OCI-LY7 (cell line): ENCODE measurements at regions of chr12 and their contacts with region 1.

Region 1: DNA sequence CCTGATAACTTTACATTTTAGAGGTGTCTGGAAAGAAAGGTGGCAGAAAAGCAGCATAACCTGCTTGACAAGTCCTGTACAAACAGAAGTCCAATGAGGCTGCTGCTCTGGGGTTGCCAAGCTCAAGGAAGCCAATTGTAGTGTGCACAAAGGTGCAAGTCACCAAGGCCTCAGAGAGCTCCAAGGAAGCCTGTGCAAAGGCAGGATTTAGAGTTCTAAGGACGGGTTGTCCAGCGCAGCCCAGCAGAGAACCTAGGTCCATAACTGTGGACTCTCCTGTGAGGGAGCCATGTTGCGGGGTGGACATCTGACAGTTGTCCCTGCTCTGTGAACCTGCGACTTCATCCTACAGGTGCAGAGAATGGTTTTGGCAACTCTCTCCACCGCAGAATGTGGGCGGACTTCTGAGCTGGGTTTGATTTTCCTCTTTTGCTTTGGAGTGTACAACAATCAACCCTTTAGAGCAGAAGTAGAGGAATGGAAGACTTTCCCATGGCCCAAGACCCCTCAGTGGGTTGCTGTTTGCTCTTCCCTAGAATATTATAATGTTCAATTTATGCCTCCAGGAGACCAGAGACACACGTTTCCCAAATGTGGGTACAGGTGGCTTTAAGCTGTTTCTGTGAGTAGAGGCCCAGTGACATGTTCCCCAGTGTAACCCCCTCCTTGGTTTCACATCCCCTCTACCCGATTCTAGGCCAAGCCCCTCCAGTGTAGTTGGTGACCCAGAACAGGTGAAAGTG is 81.0 kb downstream of the ETV6 start:
- DNase-seq: peak; percentile 93
- H3K4me3 ChIP-seq: peak overlapping the region; percentile 62
- H3K27ac ChIP-seq: peak overlapping the region; percentile 91
- H3K4me1 ChIP-seq: peaks cover 99% of the 10 kb centered on the region
- CTCF ChIP-seq: no peak

Region 2: DNA sequence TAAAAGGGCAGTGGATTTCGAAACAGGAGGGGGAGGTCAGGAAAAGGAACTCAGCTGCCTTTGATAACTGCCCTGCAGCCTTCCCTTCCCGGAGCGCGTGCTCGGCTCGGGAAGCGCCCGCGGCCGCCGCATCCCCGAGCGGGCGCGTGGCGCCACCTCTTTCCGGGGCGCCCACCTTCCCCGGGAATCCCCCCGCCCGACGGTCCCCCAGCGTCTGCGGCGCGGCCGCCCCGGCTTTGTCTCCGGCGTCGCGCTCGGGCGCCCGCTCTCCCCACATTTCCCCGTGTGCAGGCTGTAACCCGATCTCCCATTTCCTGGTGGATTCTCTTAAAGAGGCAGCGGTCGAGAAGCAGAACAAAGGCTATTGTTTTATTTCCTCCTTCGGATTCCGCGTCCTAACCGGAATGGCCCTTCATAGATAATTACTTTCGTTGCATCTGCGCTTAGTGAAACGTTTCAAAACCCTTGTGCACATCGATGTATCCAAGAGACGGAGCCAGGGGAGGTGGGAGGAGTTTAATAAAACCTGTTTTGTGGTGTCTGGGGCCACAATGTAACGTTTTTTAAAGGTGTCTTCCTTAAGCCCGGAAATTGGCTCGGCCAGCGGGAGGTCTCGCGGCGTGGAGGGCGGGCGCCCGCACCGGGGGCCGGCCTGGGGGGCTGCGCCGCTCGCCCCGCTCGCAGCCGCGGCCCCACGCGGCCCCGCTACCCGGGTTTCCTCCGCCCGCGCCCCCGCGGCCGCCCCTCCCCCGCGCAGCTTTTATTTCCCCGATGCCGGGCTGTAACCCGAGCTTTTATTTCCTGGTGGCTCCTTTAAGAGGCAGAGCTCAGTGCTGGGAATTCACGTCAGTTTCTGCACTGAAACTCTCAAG is 81.4 kb before region 1 on chr12 and contains the start of gene ETV6:
- CTCF ChIA-PET with region 1: interaction called, 3 read pairs
- POLR2A ChIA-PET with region 1: interaction called, 12 read pairs
- intact Hi-C with region 1: loop called (anchors 1 kb)
- DNase-seq: peak; percentile 89
- H3K4me3 ChIP-seq: peak within 1 kb of the TSS; percentile 92
- H3K27ac ChIP-seq: peak within 1 kb of the TSS; percentile 79
- H3K4me1 ChIP-seq: peaks cover 26% of the 10 kb centered on the region
- CTCF ChIP-seq: no peak
- total RNA-seq, gene ETV6: 17.2 and 19.3 TPM in 2 replicates

Region 3: GRCh38 chr12:11673666-11674461 is 56.6 kb before region 1 on chr12:
- CTCF ChIA-PET with region 1: no interaction called
- POLR2A ChIA-PET with region 1: no interaction called
- intact Hi-C with region 1: no loop called
- DNase-seq: no peak
- H3K4me3 ChIP-seq: no peak overlapping the region
- H3K27ac ChIP-seq: no peak overlapping the region
- H3K4me1 ChIP-seq: peaks cover 22% of the 10 kb centered on the region
- CTCF ChIP-seq: no peak

Region 4: GRCh38 chr12:11753150-11753499 is 22.7 kb after region 1 on chr12:
- CTCF ChIA-PET with region 1: interaction called, 9 read pairs
- POLR2A ChIA-PET with region 1: interaction called, 201 read pairs
- intact Hi-C with region 1: loop called (anchors 1 kb)
- DNase-seq: peak; percentile 93
- H3K4me3 ChIP-seq: peak overlapping the region; percentile 40
- H3K27ac ChIP-seq: peak overlapping the region; percentile 100
- H3K4me1 ChIP-seq: peaks cover 100% of the 10 kb centered on the region
- CTCF ChIP-seq: no peak

Region 5: GRCh38 chr12:11812586-11813427 is 82.3 kb after region 1 on chr12:
- CTCF ChIA-PET with region 1: no interaction called
- POLR2A ChIA-PET with region 1: interaction called, 3 read pairs
- intact Hi-C with region 1: loop called (anchors 5 kb)
- DNase-seq: peak; percentile 73
- H3K4me3 ChIP-seq: peak overlapping the region; percentile 54
- H3K27ac ChIP-seq: peak overlapping the region; percentile 78
- H3K4me1 ChIP-seq: peaks cover 64% of the 10 kb centered on the region
- CTCF ChIP-seq: peak; percentile 54

Region 6: GRCh38 chr12:11891754-11892386 is 161.4 kb after region 1 on chr12:
- CTCF ChIA-PET with region 1: no interaction called
- POLR2A ChIA-PET with region 1: interaction called, 7 read pairs
- intact Hi-C with region 1: loop called (anchors 5 kb)
- DNase-seq: no peak
- H3K4me3 ChIP-seq: no peak overlapping the region
- H3K27ac ChIP-seq: peak overlapping the region; percentile 98
- H3K4me1 ChIP-seq: peaks cover 81% of the 10 kb centered on the region
- CTCF ChIP-seq: peak; percentile 53

Region 7: DNA sequence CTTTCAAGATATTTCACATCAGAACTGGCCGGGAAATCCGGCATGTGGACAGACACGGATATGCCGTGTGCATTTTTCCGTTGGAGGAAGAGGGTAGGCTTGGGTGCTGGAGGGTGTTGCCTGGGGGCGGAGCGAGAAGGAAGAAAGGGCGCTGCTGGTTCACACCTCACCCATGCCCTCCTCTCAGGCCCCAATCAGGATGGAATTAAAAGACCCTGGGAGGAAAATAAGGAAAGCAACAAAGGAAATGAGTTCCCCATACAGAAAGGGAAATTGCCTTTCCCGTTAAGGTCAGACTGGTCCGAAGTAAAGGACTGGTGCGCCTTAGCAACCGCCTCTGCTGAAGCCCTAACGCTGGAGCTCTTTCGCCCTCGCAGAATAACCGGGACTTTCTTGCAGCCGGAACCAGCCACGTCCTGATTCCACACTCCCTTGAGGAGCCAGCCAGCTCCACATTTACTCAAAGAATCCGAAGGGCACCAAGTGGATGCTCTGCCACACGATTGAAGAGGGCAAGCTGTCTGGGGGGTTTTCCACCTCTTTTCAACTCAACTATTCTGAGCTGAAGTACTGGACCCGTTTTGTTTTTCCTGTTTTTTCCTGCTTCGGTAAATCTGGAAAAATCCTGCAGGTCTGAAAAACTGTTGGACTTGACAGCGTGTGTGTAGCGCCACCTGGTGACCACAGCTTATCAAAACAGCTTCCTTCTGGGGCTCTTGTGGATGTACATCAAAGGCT is 302.6 kb after region 1 on chr12:
- CTCF ChIA-PET with region 1: no interaction called
- POLR2A ChIA-PET with region 1: no interaction called
- intact Hi-C with region 1: loop called (anchors 2 kb)
- DNase-seq: peak; percentile 80
- H3K4me3 ChIP-seq: peak overlapping the region; percentile 52
- H3K27ac ChIP-seq: peak overlapping the region; percentile 51
- H3K4me1 ChIP-seq: peaks cover 39% of the 10 kb centered on the region
- CTCF ChIP-seq: peak; percentile 100